ENCODE measurements at regions of chr19 and their contacts with region 1.

Region 1: GRCh38 chr19:12139885-12140547 is at the start of gene ZNF20:
- DNase-seq: peak; percentile 95 to 96
- H3K4me3 ChIP-seq: peak within 1 kb of the TSS; percentile 89
- H3K4me3 Mint-ChIP-seq: peak within 1 kb of the TSS; percentile 88
- H3K27ac Mint-ChIP-seq: peak within 1 kb of the TSS; percentile 90
- H3K4me1 ChIP-seq: 0 out of 2 replicates have a peak, but pooled peaks cover 5% of the 10 kb centered on the region
- H3K4me1 Mint-ChIP-seq: peaks cover 16% of the 10 kb centered on the region
- H3K27me3 ChIP-seq: no peaks in the 10 kb centered on the region
- H3K27me3 Mint-ChIP-seq: no peaks in the 10 kb centered on the region
- CTCF ChIP-seq: no peak
- total RNA-seq, gene ZNF20: 5.8 TPM in 2 replicates

Region 2: GRCh38 chr19:11694533-11695439 is 445.2 kb before region 1 on chr19:
- CTCF ChIA-PET with region 1: no interaction called
- POLR2A ChIA-PET with region 1: no interaction called
- intact Hi-C with region 1: loop called (anchors 5 kb)
- DNase-seq: peak; percentile 96
- H3K4me3 ChIP-seq: peak overlapping the region; percentile 90
- H3K4me3 Mint-ChIP-seq: peak overlapping the region; percentile 99
- H3K27ac Mint-ChIP-seq: peak overlapping the region; percentile 100
- H3K4me1 ChIP-seq: peaks cover 15% of the 10 kb centered on the region
- H3K4me1 Mint-ChIP-seq: peaks cover 6% of the 10 kb centered on the region
- H3K27me3 ChIP-seq: no peaks in the 10 kb centered on the region
- H3K27me3 Mint-ChIP-seq: no peaks in the 10 kb centered on the region
- CTCF ChIP-seq: no peak

Region 3: GRCh38 chr19:11814029-11814699 is 325.9 kb before region 1 on chr19 and contains the start of gene ZNF440:
- CTCF ChIA-PET with region 1: no interaction called
- POLR2A ChIA-PET with region 1: no interaction called
- intact Hi-C with region 1: loop called (anchors 5 kb)
- DNase-seq: peak; percentile 95 to 96
- H3K4me3 ChIP-seq: peak within 1 kb of the TSS; percentile 93
- H3K4me3 Mint-ChIP-seq: peak within 1 kb of the TSS; percentile 86
- H3K27ac Mint-ChIP-seq: peak within 1 kb of the TSS; percentile 90
- H3K4me1 ChIP-seq: peaks cover 5% of the 10 kb centered on the region; the same call in 1 of the 2 replicates
- H3K4me1 Mint-ChIP-seq: peaks cover 6% of the 10 kb centered on the region
- H3K27me3 ChIP-seq: no peaks in the 10 kb centered on the region
- H3K27me3 Mint-ChIP-seq: no peaks in the 10 kb centered on the region
- CTCF ChIP-seq: no peak
- total RNA-seq, gene ZNF440: 12.5 and 13.4 TPM in 2 replicates

Region 4: DNA sequence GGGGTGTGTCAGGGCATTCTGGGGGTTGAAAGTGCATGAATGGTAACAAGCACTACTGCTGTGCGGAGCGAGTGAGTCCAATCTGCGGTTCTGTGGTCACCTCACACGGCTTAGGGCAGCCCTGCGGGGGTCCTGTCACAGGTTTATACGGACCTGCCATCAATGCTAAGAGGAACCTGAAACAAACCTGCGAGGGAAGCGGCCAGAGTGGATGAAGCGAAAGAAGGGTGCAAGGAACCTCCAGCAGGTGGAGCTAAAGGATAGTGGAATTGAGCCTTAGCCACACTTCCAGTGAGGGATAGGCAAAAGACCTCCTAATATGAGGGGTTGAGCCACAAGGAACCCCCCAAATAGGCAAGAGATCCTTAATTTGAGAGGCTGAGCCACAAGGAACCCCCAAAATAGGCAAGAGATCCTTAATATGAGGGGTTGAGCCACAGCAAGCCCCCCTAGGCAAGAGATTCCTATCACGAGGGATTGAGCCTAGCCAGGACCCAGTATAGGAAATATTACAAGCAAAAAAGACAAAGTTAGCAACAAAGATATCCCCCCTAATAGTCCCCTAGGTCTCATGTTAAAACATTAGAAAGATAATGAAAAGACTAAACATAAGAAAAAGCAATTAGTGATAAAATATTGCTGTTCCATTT is 258.7 kb before region 1 on chr19:
- CTCF ChIA-PET with region 1: no interaction called
- POLR2A ChIA-PET with region 1: interaction called, 3 read pairs
- intact Hi-C with region 1: loop called (anchors 1 kb)
- DNase-seq: peak; percentile 41 to 58
- H3K4me3 ChIP-seq: no peak overlapping the region
- H3K4me3 Mint-ChIP-seq: no peak overlapping the region
- H3K27ac Mint-ChIP-seq: no peak overlapping the region
- H3K4me1 ChIP-seq: no peaks in the 10 kb centered on the region
- H3K4me1 Mint-ChIP-seq: no peaks in the 10 kb centered on the region
- H3K27me3 ChIP-seq: no peaks in the 10 kb centered on the region
- H3K27me3 Mint-ChIP-seq: no peaks in the 10 kb centered on the region
- CTCF ChIP-seq: peak; percentile 38 to 62

Region 5: GRCh38 chr19:11987405-11988281 is 152.4 kb before region 1 on chr19:
- CTCF ChIA-PET with region 1: interaction called, 7 read pairs
- POLR2A ChIA-PET with region 1: no interaction called
- intact Hi-C with region 1: loop called (anchors 2 kb)
- DNase-seq: peak; percentile 81 to 92
- H3K4me3 ChIP-seq: peak overlapping the region; percentile 71
- H3K4me3 Mint-ChIP-seq: peak overlapping the region; percentile 91
- H3K27ac Mint-ChIP-seq: peak overlapping the region; percentile 65
- H3K4me1 ChIP-seq: no peaks in the 10 kb centered on the region
- H3K4me1 Mint-ChIP-seq: peaks cover 8% of the 10 kb centered on the region
- H3K27me3 ChIP-seq: no peaks in the 10 kb centered on the region
- H3K27me3 Mint-ChIP-seq: no peaks in the 10 kb centered on the region
- CTCF ChIP-seq: no peak

Region 6: GRCh38 chr19:12055783-12056182 is 84.2 kb before region 1 on chr19:
- CTCF ChIA-PET with region 1: interaction called, 30 read pairs
- POLR2A ChIA-PET with region 1: no interaction called
- intact Hi-C with region 1: loop called (anchors 1 kb)
- DNase-seq: no peak
- H3K4me3 ChIP-seq: no peak overlapping the region
- H3K4me3 Mint-ChIP-seq: no peak overlapping the region
- H3K27ac Mint-ChIP-seq: no peak overlapping the region
- H3K4me1 ChIP-seq: no peaks in the 10 kb centered on the region
- H3K4me1 Mint-ChIP-seq: no peaks in the 10 kb centered on the region
- H3K27me3 ChIP-seq: no peaks in the 10 kb centered on the region
- H3K27me3 Mint-ChIP-seq: no peaks in the 10 kb centered on the region
- CTCF ChIP-seq: no peak

Region 7: GRCh38 chr19:12064590-12065538 is 75.2 kb before region 1 on chr19 and contains the start of gene ZNF844:
- CTCF ChIA-PET with region 1: interaction called, 30 read pairs
- POLR2A ChIA-PET with region 1: no interaction called
- intact Hi-C with region 1: no loop called
- DNase-seq: peak; percentile 44 to 74
- H3K4me3 ChIP-seq: peak within 1 kb of the TSS; percentile 37
- H3K4me3 Mint-ChIP-seq: peak within 1 kb of the TSS; percentile 43
- H3K27ac Mint-ChIP-seq: no peak within 1 kb of the TSS
- H3K4me1 ChIP-seq: no peaks in the 10 kb centered on the region
- H3K4me1 Mint-ChIP-seq: no peaks in the 10 kb centered on the region
- H3K27me3 ChIP-seq: no peaks in the 10 kb centered on the region
- H3K27me3 Mint-ChIP-seq: no peaks in the 10 kb centered on the region
- CTCF ChIP-seq: no peak
- total RNA-seq, gene ZNF844: 0.72 and 1.0 TPM in 2 replicates